Activated CD8-positive, alpha-beta T cell treated with anti-CD3 and anti-CD28 coated beads, Interleukin-2, amount 10 ng/mL, durations not matched to agents 7 days and 5 days (primary cell): ENCODE measurements at regions of chr7 and their contacts with region 1.

Region 1: GRCh38 chr7:135274495-135275268 is 41.0 kb downstream of the STRA8 start:
- DNase-seq: peak; percentile 83
- ATAC-seq: peak; percentile 82
- H3K4me3 Mint-ChIP-seq: no peak overlapping the region
- H3K27ac Mint-ChIP-seq: no peak overlapping the region
- H3K4me1 Mint-ChIP-seq: no peaks in the 10 kb centered on the region
- H3K27me3 Mint-ChIP-seq: peaks cover 3% of the 10 kb centered on the region

Region 2: DNA sequence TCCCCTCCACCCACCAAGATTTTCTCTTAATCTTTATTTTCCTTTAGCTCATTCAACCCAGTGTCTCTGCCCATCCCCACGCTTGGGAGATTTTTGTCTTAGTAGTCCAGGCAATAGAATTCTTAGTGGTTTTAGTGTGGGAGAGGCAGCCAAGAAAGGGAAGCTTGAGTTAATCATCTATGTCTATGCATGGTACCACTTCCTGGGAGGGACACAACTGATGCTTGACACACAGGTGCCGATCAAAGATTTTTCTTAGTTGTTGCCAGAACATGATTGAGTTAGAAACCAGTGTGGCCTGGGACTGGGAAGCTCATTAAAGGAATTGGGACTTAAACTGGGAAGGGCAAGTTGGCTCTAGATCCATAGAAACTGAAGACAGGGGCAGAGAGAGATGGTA is 38.0 kb before region 1 on chr7:
- CTCF ChIA-PET with region 1: interaction called, 12 read pairs
- POLR2A ChIA-PET with region 1: no interaction called
- DNase-seq: no peak
- ATAC-seq: no peak
- H3K4me3 Mint-ChIP-seq: no peak overlapping the region
- H3K27ac Mint-ChIP-seq: no peak overlapping the region
- H3K4me1 Mint-ChIP-seq: peaks cover 9% of the 10 kb centered on the region
- H3K27me3 Mint-ChIP-seq: peaks cover 2% of the 10 kb centered on the region

Region 3: GRCh38 chr7:135260930-135261721 is 13.6 kb before region 1 on chr7:
- CTCF ChIA-PET with region 1: interaction called, 22 read pairs
- POLR2A ChIA-PET with region 1: no interaction called
- DNase-seq: no peak
- ATAC-seq: no peak
- H3K4me3 Mint-ChIP-seq: no peak overlapping the region
- H3K27ac Mint-ChIP-seq: no peak overlapping the region
- H3K4me1 Mint-ChIP-seq: no peaks in the 10 kb centered on the region
- H3K27me3 Mint-ChIP-seq: peaks cover 3% of the 10 kb centered on the region

Region 4: GRCh38 chr7:135335628-135336139 is 61.0 kb after region 1 on chr7:
- CTCF ChIA-PET with region 1: interaction called, 43 read pairs
- POLR2A ChIA-PET with region 1: interaction called, 3 read pairs
- DNase-seq: peak; percentile 42
- ATAC-seq: no peak
- H3K4me3 Mint-ChIP-seq: no peak overlapping the region
- H3K27ac Mint-ChIP-seq: no peak overlapping the region
- H3K4me1 Mint-ChIP-seq: peaks cover 3% of the 10 kb centered on the region
- H3K27me3 Mint-ChIP-seq: no peaks in the 10 kb centered on the region

Region 5: GRCh38 chr7:135525426-135525825 is 250.7 kb after region 1 on chr7:
- CTCF ChIA-PET with region 1: no interaction called
- POLR2A ChIA-PET with region 1: no interaction called
- DNase-seq: no peak
- ATAC-seq: no peak
- H3K4me3 Mint-ChIP-seq: no peak overlapping the region
- H3K27ac Mint-ChIP-seq: no peak overlapping the region
- H3K4me1 Mint-ChIP-seq: no peaks in the 10 kb centered on the region
- H3K27me3 Mint-ChIP-seq: peaks cover 3% of the 10 kb centered on the region